ENCODE measurements at regions of chr6 and their contacts with region 1.

Region 1: GRCh38 chr6:44237813-44238433 is 9.0 kb upstream of the HSP90AB1 start:
- DNase-seq: peak; percentile 72 to 98 (median 85)
- ATAC-seq: peak; percentile 90
- H3K4me3 ChIP-seq: peak overlapping the region; percentile 42 to 57
- H3K27ac ChIP-seq: peak overlapping the region; percentile 81 to 91
- H3K4me1 ChIP-seq: peaks cover 10 to 51% of the 10 kb centered on the region in 2 donors
- H3K27me3 ChIP-seq: no peaks in the 10 kb centered on the region
- CTCF ChIP-seq: peak; percentile 97 to 99

Region 2: GRCh38 chr6:44172731-44173500 is 65.0 kb before region 1 on chr6:
- intact Hi-C with region 1: loop called in 1 of 2 experiments (anchors 5 kb)
- DNase-seq: peak; percentile 69 to 90 (median 86)
- ATAC-seq: peak; percentile 98
- H3K4me3 ChIP-seq: no peak overlapping the region
- H3K27ac ChIP-seq: no peak overlapping the region
- H3K4me1 ChIP-seq: peaks cover 0 to 13% of the 10 kb centered on the region in 2 donors
- H3K27me3 ChIP-seq: no peaks in the 10 kb centered on the region
- CTCF ChIP-seq: peak; percentile 82 to 88

Region 3: DNA sequence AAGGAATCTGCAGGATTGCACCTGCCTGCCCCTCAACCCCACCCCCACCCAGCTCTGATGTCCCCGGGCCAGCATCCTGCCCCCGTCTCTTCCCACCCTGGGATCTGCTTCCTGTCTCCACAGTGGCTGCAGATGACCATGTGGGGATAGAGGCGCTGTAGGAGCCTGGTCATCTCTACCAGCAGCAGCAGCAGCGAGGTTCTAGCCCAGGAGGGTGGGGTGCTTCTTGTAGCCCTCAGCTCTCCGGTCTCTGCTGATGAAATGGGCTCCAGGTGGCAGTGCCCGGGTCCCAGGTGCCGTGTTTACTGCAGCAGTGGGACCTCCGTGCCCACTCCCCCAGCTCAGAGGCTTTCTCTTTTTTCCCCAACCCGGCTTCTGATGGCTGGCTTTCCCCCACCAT is 54.1 kb before region 1 on chr6:
- intact Hi-C with region 1: no loop called
- DNase-seq: no peak
- ATAC-seq: no peak
- H3K4me3 ChIP-seq: no peak overlapping the region
- H3K27ac ChIP-seq: no peak overlapping the region
- H3K4me1 ChIP-seq: no peaks in the 10 kb centered on the region
- H3K27me3 ChIP-seq: no peaks in the 10 kb centered on the region
- CTCF ChIP-seq: no peak

Region 4: GRCh38 chr6:44446628-44447306 is 208.8 kb after region 1 on chr6:
- intact Hi-C with region 1: no loop called
- DNase-seq: no peak
- ATAC-seq: peak; percentile 92
- H3K4me3 ChIP-seq: no peak overlapping the region
- H3K27ac ChIP-seq: no peak overlapping the region
- H3K4me1 ChIP-seq: no peaks in the 10 kb centered on the region
- H3K27me3 ChIP-seq: no peaks in the 10 kb centered on the region
- CTCF ChIP-seq: no peak

Measured in left lung (tissue), 14 donors.